ENCODE measurements at regions of chr5 and their contacts with region 1.

Region 1: GRCh38 chr5:59174248-59174844 is 591.5 kb downstream of the RAB3C start:
- DNase-seq: peak; percentile 47
- ATAC-seq: peak; percentile 76
- H3K4me3 Mint-ChIP-seq: no peak overlapping the region
- H3K27ac Mint-ChIP-seq: no peak overlapping the region
- H3K4me1 Mint-ChIP-seq: peaks cover 19% of the 10 kb centered on the region
- H3K27me3 Mint-ChIP-seq: no peaks in the 10 kb centered on the region
- CTCF ChIP-seq: peak; percentile 92

Region 2: GRCh38 chr5:58746321-58746720 is 428.0 kb before region 1 on chr5:
- CTCF ChIA-PET with region 1: no interaction called
- POLR2A ChIA-PET with region 1: no interaction called
- intact Hi-C with region 1: no loop called
- DNase-seq: no peak
- ATAC-seq: no peak
- H3K4me3 Mint-ChIP-seq: no peak overlapping the region
- H3K27ac Mint-ChIP-seq: no peak overlapping the region
- H3K4me1 Mint-ChIP-seq: no peaks in the 10 kb centered on the region
- H3K27me3 Mint-ChIP-seq: peaks cover 2% of the 10 kb centered on the region
- CTCF ChIP-seq: no peak

Region 3: GRCh38 chr5:58983526-58984452 is 190.6 kb before region 1 on chr5:
- CTCF ChIA-PET with region 1: interaction called, 16 read pairs
- POLR2A ChIA-PET with region 1: no interaction called
- intact Hi-C with region 1: no loop called
- DNase-seq: no peak
- ATAC-seq: no peak
- H3K4me3 Mint-ChIP-seq: no peak overlapping the region
- H3K27ac Mint-ChIP-seq: no peak overlapping the region
- H3K4me1 Mint-ChIP-seq: peaks cover 2% of the 10 kb centered on the region
- H3K27me3 Mint-ChIP-seq: no peaks in the 10 kb centered on the region
- CTCF ChIP-seq: no peak

Region 4: DNA sequence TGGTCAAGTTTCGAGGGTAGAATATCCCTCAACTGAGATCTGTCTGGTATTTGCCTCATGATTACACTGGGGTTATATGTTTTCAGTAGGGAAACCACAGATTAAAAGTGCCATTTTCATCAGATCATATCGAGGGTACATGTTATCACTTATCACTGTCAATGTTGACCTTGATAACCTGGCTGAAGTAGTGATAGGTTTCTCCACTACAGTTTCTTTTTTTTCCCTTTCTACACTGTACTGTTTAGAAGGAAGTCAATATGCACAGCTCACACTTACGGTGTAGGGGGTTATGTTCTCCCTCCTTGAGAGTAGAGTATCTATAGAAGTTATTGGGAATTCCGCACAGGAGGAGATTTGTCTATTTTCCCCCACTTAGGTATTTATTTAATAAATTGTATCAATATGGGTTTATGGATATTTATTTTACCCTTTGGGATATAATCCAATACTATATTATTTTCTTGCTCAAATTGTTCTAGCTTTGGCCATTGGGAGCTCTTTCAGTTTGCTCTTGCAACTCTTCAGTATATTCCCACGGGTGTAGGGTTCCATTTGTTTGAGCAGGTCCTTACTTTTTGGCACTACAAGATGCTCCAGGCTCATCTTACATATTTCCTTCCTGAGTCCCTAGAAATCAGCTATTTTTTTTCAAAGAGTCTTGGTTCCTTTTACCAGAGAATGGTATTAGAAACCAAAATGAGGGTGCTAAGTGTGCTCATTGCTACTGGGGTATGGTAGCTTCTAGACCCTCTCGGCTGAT is 147.0 kb before region 1 on chr5:
- CTCF ChIA-PET with region 1: interaction called, 135 read pairs
- POLR2A ChIA-PET with region 1: no interaction called
- intact Hi-C with region 1: no loop called
- DNase-seq: no peak
- ATAC-seq: no peak
- H3K4me3 Mint-ChIP-seq: no peak overlapping the region
- H3K27ac Mint-ChIP-seq: no peak overlapping the region
- H3K4me1 Mint-ChIP-seq: peaks cover 51% of the 10 kb centered on the region
- H3K27me3 Mint-ChIP-seq: no peaks in the 10 kb centered on the region
- CTCF ChIP-seq: no peak

Region 5: DNA sequence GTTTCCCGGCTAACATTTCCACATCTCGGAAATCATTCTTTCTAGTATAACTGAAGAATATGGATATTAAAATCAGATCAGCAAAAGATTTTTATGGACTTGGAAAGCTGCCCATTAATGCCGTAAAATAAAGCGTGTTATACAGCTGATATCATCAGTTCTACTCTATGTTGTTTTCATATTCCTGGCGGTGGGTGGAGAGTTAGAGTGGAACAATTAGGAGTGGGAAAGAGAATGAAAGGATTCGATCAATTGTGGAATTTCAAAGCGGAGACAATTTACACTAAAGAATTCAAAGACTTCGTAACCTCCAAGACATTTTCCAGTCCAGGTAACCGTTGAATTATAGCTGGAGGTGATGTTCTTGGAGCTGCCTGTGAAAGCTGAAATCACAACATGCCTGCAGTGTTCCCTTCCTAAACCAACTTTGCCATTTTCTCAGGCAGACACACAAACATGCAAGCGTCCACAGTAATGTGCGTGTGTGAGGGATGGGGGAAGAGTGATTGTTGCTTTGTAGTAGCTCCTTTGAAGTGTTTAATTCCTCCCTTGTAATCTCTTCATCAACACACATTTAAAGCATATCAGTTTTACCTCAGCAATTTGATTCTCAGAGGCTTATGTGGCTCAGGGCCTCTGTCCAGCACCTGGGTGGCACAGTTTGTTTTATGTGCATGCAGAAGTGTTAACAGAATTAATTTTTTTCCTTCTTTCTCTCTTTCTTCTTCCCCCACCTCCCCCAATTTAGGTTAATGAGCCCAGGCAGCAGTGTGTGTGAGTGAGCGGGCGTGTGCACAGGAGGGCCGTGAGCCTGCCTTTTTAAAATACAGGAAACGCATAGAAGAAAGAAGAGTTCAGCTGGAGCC is 47.4 kb before region 1 on chr5:
- CTCF ChIA-PET with region 1: interaction called, 34 read pairs
- POLR2A ChIA-PET with region 1: interaction called, 7 read pairs
- intact Hi-C with region 1: loop called (anchors 5 kb)
- DNase-seq: no peak
- ATAC-seq: peak; percentile 11
- H3K4me3 Mint-ChIP-seq: no peak overlapping the region
- H3K27ac Mint-ChIP-seq: no peak overlapping the region
- H3K4me1 Mint-ChIP-seq: peaks cover 33% of the 10 kb centered on the region
- H3K27me3 Mint-ChIP-seq: no peaks in the 10 kb centered on the region
- CTCF ChIP-seq: no peak

Region 6: GRCh38 chr5:59152701-59153245 is 21.6 kb before region 1 on chr5:
- CTCF ChIA-PET with region 1: interaction called, 18 read pairs
- POLR2A ChIA-PET with region 1: interaction called, 4 read pairs
- intact Hi-C with region 1: no loop called
- DNase-seq: peak; percentile 14
- ATAC-seq: peak; percentile 72
- H3K4me3 Mint-ChIP-seq: no peak overlapping the region
- H3K27ac Mint-ChIP-seq: no peak overlapping the region
- H3K4me1 Mint-ChIP-seq: peaks cover 6% of the 10 kb centered on the region
- H3K27me3 Mint-ChIP-seq: no peaks in the 10 kb centered on the region
- CTCF ChIP-seq: no peak

Region 7: GRCh38 chr5:59193616-59194319 is 19.4 kb after region 1 on chr5:
- CTCF ChIA-PET with region 1: interaction called, 52 read pairs
- POLR2A ChIA-PET with region 1: no interaction called
- intact Hi-C with region 1: no loop called
- DNase-seq: no peak
- ATAC-seq: no peak
- H3K4me3 Mint-ChIP-seq: no peak overlapping the region
- H3K27ac Mint-ChIP-seq: no peak overlapping the region
- H3K4me1 Mint-ChIP-seq: peaks cover 2% of the 10 kb centered on the region
- H3K27me3 Mint-ChIP-seq: peaks cover 7% of the 10 kb centered on the region
- CTCF ChIP-seq: no peak